K562 (cell line): ENCODE measurements at regions of chr7 and their contacts with region 1.

Region 1: DNA sequence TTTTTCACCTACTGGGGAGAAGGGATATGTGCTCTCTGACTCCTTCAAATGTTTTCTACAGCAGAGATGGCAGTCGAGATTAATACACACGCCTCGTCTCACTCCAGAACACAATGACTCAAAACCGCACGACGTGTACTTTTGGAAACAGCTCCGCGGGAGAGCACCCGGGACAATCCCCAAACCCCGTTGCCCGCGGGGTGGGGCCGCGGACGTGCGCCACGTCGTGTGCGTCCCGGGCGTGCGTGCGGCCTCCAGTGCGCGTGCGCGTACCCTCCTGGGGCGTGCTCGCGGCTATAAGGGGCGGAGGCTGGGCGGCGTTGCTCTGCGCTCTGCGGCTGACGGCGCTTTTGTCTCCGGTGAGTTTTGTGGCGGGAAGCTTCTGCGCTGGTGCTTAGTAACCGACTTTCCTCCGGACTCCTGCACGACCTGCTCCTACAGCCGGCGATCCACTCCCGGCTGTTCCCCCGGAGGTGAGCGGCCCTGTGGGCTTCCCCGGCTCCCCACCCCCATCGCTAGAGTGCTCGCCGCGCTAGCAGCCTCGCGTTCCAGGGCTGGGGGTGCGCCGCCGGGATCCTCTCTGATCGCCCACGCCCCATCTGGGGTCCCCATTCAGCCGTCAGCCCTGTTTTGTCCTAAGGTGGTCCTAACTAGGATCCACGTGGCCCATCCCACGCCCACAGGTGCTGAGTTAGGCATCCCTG is at the start of gene HILPDA:
- DNase-seq: peak; percentile 97 to 99 (median 99)
- ATAC-seq: peak; percentile 97
- H3K4me3 ChIP-seq: peak within 1 kb of the TSS; percentile 74
- H3K27ac ChIP-seq: peak within 1 kb of the TSS; percentile 85
- H3K4me1 ChIP-seq: peaks cover 25 to 30% of the 10 kb centered on the region in 2 experiments; a peak in 4 of 5 replicates
- H3K27me3 ChIP-seq: no peaks in the 10 kb centered on the region
- CTCF ChIP-seq: 0 out of 6 replicates have a peak, but pooled peaks of 1 of the 3 experiments have one; percentile 3
- EP300 ChIP-seq: no peak; the same call in none of the 2 replicates
- POLR2A ChIP-seq: peak; percentile 87
- RAD21 ChIP-seq: peak in 1 of 2 experiments; percentile 8; a peak in 1 of 4 replicates
- polyA plus RNA-seq, gene HILPDA: 28.6 to 40.5 TPM

Region 2: DNA sequence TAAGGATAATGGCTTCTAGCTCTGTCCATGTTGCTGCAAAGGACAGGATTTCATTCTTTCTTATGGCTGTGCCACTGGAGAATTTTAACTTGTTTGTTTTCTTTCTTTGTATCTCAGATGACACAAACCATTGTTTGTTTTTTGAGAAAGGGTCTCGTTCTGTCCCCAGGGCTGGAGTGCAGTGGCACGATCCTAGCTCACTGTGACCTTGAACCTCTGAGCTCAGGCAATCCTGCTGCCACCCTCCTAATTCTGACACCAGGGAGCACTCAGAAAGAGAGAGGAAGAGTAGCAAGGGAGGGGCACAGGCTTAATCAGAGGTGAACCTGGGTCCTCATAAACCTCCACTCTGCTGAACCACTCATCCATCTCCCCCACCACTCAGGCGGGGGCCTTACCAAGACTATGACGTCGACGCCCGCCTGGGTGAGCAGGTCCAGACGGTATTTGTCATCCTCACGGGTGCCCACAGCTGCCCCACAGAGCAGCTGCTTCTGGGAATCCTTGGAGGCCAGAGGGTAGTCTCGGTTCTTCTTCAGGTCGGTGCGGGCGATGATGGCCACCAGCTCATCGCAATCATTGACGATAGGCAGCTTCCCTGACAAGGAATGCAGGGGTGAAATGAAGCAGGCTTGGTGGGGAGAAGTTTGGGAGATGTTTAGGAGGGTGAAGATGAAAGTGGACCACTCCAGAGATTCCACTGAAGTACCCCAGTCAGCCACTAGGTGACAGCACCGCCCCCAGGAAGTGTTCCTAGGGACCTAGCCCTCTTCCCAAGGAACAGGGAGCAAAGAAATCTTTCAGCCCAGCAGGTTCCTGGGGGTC is 57.5 kb before region 1 on chr7:
- CTCF ChIA-PET with region 1: interaction called, 10 read pairs
- POLR2A ChIA-PET with region 1: interaction called, 3 read pairs
- in situ Hi-C with region 1: no loop called
- intact Hi-C with region 1: loop called (anchors 1 kb)
- DNase-seq: peak; percentile 73 to 79 (median 75)
- ATAC-seq: peak; percentile 86
- H3K4me3 ChIP-seq: no peak overlapping the region
- H3K27ac ChIP-seq: no peak overlapping the region
- H3K4me1 ChIP-seq: peaks cover 0 to 12% of the 10 kb centered on the region in 2 experiments; a peak in 2 of 5 replicates
- H3K27me3 ChIP-seq: no peaks in the 10 kb centered on the region
- CTCF ChIP-seq: peak; percentile 95 to 99 (median 98)
- EP300 ChIP-seq: 0 out of 2 replicates have a peak, but pooled peaks have one; percentile 13
- POLR2A ChIP-seq: 0 out of 2 replicates have a peak, but pooled peaks have one; percentile 19
- RAD21 ChIP-seq: peak; percentile 93 to 98

Region 3: DNA sequence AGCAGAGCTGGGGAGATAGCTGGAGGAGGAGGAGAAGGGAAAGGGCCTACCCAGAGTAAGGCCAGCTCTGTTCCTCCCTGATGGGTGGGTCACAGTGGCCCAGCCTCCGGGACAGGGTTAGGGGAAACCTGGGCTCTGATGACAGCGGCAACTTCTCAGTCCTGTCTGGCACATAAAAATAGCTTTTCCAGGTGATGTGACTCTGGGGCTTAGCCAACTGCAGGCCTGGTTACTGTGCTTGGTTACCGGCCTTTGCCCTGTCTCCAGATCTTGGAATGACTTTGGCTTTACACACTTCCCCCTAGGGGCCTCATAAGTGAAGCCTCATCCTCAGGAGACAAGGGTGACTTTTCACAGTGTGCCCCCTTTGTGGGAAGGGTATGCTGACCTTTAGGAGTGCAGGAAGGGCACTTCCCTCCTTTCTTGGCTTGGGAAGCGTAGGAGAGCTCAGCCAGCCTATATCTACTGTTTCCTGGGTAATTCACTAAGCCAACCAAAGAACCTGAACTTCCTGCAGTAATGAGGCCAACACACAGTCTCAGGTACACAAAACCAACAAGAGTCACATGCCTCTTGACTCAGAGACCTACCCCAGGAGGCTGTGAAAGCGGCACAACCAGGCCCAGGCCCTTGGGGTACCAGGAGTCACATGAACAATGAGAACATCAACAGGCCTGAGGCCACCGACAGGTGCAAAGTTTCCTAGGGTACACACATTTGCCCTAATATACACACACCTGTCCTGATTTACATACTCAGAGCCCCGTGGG is 11.7 kb before region 1 on chr7:
- CTCF ChIA-PET with region 1: no interaction called
- POLR2A ChIA-PET with region 1: interaction called, 12 read pairs
- in situ Hi-C with region 1: no loop called
- intact Hi-C with region 1: no loop called
- DNase-seq: no peak
- ATAC-seq: peak; percentile 33
- H3K4me3 ChIP-seq: no peak overlapping the region
- H3K27ac ChIP-seq: no peak overlapping the region
- H3K4me1 ChIP-seq: peaks cover 0 to 8% of the 10 kb centered on the region in 2 experiments; a peak in 3 of 5 replicates
- H3K27me3 ChIP-seq: no peaks in the 10 kb centered on the region
- CTCF ChIP-seq: no peak
- EP300 ChIP-seq: no peak
- POLR2A ChIP-seq: no peak
- RAD21 ChIP-seq: no peak

Region 4: GRCh38 chr7:128713794-128714193 is 258.1 kb after region 1 on chr7:
- CTCF ChIA-PET with region 1: no interaction called
- POLR2A ChIA-PET with region 1: no interaction called
- in situ Hi-C with region 1: no loop called
- intact Hi-C with region 1: no loop called
- DNase-seq: no peak
- ATAC-seq: no peak
- H3K4me3 ChIP-seq: no peak overlapping the region
- H3K27ac ChIP-seq: no peak overlapping the region
- H3K4me1 ChIP-seq: no peaks in the 10 kb centered on the region; a peak in 1 of 5 replicates
- H3K27me3 ChIP-seq: peaks cover 3 to 23% of the 10 kb centered on the region in 2 experiments; a peak in 4 of 5 replicates
- CTCF ChIP-seq: no peak
- EP300 ChIP-seq: no peak
- POLR2A ChIP-seq: no peak
- RAD21 ChIP-seq: no peak